Left colon (tissue), 2 donors: ENCODE measurements at regions of chr17 and their contacts with region 1.

Region 1: GRCh38 chr17:64025732-64026294 is 5.4 kb upstream of the ICAM2 start:
- DNase-seq: peak; percentile 81 to 87
- ATAC-seq: peak; percentile 86

Region 2: GRCh38 chr17:63919311-63919723 is 106.5 kb before region 1 on chr17:
- intact Hi-C with region 1: loop called (anchors 10 kb)
- DNase-seq: peak; percentile 32 to 68
- ATAC-seq: peak; percentile 83

Region 3: GRCh38 chr17:63929860-63930766 is 95.7 kb before region 1 on chr17:
- intact Hi-C with region 1: loop called in 1 of 2 experiments (anchors 10 kb)
- DNase-seq: no peak
- ATAC-seq: no peak